ENCODE measurements at regions of chr2 and their contacts with region 1.

Region 1: DNA sequence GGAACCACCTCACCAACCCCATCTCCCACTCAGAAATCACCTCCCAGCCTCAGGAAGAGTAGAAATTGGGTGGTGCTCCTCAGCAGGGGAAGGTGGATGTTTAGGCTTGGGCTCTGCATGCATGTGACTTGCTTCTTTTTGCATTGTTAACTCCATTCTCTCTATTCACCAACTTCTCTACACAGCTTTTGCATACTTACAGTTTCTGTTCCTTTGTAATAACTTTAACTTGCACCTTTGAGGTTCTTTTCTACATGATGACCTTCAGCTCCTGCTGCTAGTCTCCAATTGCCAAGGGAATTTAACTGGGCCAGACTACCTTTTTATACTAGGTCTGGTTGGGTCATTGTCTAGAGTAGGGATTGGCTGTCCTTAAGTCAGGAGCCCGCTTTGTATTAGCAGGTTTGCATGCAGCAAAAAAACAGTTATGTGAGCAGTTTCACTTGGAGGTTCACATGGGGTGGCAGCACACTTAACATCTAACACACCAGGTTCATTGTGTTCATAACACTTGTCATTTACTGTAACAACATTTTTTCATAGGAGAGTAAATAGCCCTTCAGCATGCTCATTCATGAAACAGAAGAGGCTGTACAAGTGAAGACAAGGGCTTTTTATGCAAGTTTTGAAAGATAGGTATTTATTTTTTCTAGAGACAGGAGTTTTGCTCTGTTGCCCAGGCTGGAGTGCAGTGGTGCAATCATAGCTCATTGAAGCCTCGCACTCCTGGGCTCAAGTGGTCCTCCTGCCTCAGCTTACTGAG is 12.0 kb downstream of the MRPL35 start:
- DNase-seq: peak; percentile 73
- ATAC-seq: peak; percentile 77
- H3K4me3 ChIP-seq: no peak overlapping the region
- H3K27ac ChIP-seq: peak overlapping the region; percentile 70
- H3K4me1 ChIP-seq: peaks cover 47% of the 10 kb centered on the region
- H3K27me3 ChIP-seq: no peaks in the 10 kb centered on the region
- CTCF ChIP-seq: no peak
- EP300 ChIP-seq: peak; percentile 40 to 66; a peak in 1 of 4 replicates
- POLR2A ChIP-seq: peak in 1 of 2 experiments; percentile 56; a peak in 1 of 4 replicates
- RAD21 ChIP-seq: no peak

Region 2: DNA sequence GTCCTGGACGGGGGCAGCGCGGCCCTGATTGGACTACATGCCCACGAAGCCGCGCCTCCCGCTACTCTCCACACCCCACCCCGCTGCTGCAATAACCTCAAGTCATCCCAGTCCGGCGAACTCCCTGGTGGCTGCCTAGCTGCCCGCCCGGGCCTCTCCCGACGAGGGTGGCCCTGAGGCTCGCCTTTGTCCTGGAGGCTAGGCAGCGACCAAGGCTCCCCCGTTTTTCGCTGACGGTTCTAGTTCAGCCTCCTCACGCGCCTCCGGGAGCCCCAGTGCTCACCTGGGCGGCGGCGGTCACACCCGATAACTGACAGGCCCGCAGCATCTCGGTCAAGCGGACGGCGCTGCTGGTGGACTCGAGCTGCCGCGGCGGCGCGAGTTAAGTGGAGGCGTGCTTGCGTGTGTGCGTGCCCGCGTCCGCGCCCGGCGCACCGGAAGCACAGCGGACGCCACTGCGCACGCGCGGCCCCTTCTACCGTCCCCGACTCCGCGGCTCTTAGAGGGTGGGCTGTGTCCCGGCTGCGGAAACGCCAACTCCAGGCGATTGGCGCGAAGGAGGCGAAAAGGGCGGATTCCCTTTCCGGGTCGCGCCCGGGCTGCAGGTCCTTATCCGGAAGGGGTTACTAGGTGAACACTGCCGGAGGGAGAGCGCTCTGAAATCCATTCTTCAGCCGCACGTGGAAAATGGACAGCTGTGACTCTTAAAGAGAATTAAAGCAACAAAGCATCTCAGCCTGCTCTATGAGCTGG is 16.0 kb before region 1 on chr2 and contains the start of gene IMMT:
- CTCF ChIA-PET with region 1: no interaction called
- POLR2A ChIA-PET with region 1: interaction called, 6 read pairs
- in situ Hi-C with region 1: no loop called
- intact Hi-C with region 1: loop called (anchors 2 kb)
- DNase-seq: peak; percentile 97
- ATAC-seq: peak; percentile 95
- H3K4me3 ChIP-seq: peak within 1 kb of the TSS; percentile 81 to 96 (median 91)
- H3K27ac ChIP-seq: peak within 1 kb of the TSS; percentile 95
- H3K4me1 ChIP-seq: peaks cover 53% of the 10 kb centered on the region
- H3K27me3 ChIP-seq: no peaks in the 10 kb centered on the region; a peak in 1 of 5 replicates
- CTCF ChIP-seq: no peak; the same call in 1 of the 2 replicates
- EP300 ChIP-seq: 0 out of 4 replicates have a peak, but pooled peaks of 1 of the 2 experiments have one; percentile 63
- POLR2A ChIP-seq: peak; percentile 92 to 95
- RAD21 ChIP-seq: peak; percentile 67
- total RNA-seq, gene IMMT: 119 and 174 TPM in 2 replicates

Region 3: DNA sequence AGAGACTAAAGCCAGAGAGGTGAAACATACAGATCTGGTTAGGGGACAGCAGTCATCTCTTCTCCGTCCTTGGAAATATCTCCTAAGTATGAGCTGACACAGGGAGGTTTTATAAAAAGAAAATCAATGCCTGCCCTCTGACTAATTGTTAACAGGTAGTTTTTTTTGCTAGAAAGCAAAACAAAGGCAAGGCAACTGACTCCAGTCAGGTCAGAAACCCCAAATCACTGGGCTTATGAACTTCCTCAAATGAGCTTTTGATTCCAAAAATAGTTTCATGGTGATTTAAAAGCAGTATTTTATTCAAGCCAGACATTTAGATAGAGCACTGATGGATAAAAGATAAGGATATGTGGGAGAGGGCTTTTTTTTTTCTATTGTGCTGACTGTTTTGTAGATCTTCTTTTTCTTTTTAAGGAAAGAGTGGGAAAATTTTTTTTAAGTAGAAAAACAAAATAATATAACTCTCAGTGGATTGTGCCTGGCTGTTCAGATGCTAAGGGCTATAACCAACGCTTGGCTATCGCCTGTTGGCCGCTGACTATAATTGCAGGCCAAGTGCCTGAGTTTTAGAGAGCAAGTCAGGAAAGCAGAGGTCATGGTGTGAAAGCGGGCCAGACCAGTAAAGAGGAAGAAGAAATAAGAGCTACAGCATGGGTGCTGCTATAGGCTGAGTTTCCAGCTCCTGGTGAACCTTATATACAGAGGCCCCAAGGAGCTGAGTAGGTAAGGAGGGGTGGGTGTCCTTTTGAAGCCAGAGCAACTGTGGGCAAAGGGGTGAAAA is 32.9 kb after region 1 on chr2:
- CTCF ChIA-PET with region 1: no interaction called
- POLR2A ChIA-PET with region 1: no interaction called
- in situ Hi-C with region 1: no loop called
- intact Hi-C with region 1: no loop called
- DNase-seq: no peak
- ATAC-seq: peak; percentile 31; the same call in 1 of the 3 replicates
- H3K4me3 ChIP-seq: no peak overlapping the region
- H3K27ac ChIP-seq: no peak overlapping the region
- H3K4me1 ChIP-seq: peaks cover 5% of the 10 kb centered on the region; the same call in 1 of the 2 replicates
- H3K27me3 ChIP-seq: peaks cover 3 to 37% of the 10 kb centered on the region in 2 experiments; a peak in 4 of 5 replicates
- CTCF ChIP-seq: 0 out of 2 replicates have a peak, but pooled peaks have one; percentile 17
- EP300 ChIP-seq: no peak
- POLR2A ChIP-seq: no peak
- RAD21 ChIP-seq: no peak

Measured in HepG2 (cell line).